ENCODE measurements at regions of chr6 and their contacts with region 1.

Region 1: GRCh38 chr6:42259841-42260395 is 42.3 kb upstream of the MRPS10 start:
- DNase-seq: no peak
- H3K4me3 ChIP-seq: peak overlapping the region; percentile 21 to 32 (median 27)
- H3K27ac ChIP-seq: peak overlapping the region; percentile 1 to 76
- H3K4me1 ChIP-seq: no peaks in the 10 kb centered on the region
- H3K27me3 ChIP-seq: no peaks in the 10 kb centered on the region
- CTCF ChIP-seq: no peak
- POLR2A ChIP-seq: no peak

Region 2: GRCh38 chr6:41072676-41073623 is 1187.0 kb before region 1 on chr6 and contains the start of gene NFYA:
- intact Hi-C with region 1: loop called (anchors 5 kb)
- DNase-seq: peak; percentile 99
- H3K4me3 ChIP-seq: peak within 1 kb of the TSS; percentile 78 to 99 (median 90)
- H3K27ac ChIP-seq: peak within 1 kb of the TSS; percentile 99
- H3K4me1 ChIP-seq: peaks cover 0 to 8% of the 10 kb centered on the region in 2 donors
- H3K27me3 ChIP-seq: no peaks in the 10 kb centered on the region
- CTCF ChIP-seq: peak in 1 of 3 donors; percentile 35
- POLR2A ChIP-seq: peak; percentile 26
- total RNA-seq, gene NFYA: 28.6 to 33.4 (median 29.8) TPM

Region 3: GRCh38 chr6:44172731-44173500 is 1913.0 kb after region 1 on chr6:
- intact Hi-C with region 1: no loop called
- DNase-seq: peak; percentile 83 to 89
- H3K4me3 ChIP-seq: no peak overlapping the region
- H3K27ac ChIP-seq: no peak overlapping the region
- H3K4me1 ChIP-seq: no peaks in the 10 kb centered on the region
- H3K27me3 ChIP-seq: no peaks in the 10 kb centered on the region
- CTCF ChIP-seq: peak; percentile 80 to 95 (median 93)
- POLR2A ChIP-seq: no peak

Measured in breast epithelium (tissue), 4 donors.